ENCODE measurements at regions of chr9 and their contacts with region 1.

Region 1: DNA sequence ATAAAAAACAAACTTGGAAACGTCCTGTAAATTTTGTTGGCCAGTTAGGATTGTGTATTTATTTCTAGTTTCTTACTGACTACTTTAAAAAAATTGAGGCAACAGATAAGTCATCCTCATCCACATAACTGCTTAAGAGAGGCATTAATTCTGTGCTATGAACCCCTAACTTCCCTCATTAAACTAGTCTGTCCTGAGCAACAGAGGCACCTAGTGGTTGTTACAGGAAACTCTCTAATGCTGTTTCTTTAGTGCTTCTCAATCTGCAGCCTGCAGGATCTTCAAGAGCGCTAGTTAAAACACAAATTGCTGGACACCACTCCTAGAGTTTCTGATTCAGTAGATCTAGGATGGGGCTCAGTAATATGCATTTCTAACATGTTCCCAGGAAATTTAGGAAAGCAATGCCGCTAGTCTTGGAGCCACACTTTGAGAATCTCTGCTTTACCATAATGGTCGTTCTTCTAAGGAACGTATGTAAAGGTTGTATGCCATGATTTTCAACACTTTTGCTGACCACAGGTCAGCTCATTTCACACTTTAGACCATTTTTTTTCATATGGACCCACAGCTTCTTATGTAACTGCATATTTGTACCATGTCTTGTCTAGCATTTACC is 410.1 kb upstream of the SMARCA2 start:
- DNase-seq: peak; percentile 42
- H3K4me3 ChIP-seq: no peak overlapping the region
- H3K27ac ChIP-seq: no peak overlapping the region
- H3K4me1 ChIP-seq: no peaks in the 10 kb centered on the region
- CTCF ChIP-seq: peak; percentile 81

Region 2: DNA sequence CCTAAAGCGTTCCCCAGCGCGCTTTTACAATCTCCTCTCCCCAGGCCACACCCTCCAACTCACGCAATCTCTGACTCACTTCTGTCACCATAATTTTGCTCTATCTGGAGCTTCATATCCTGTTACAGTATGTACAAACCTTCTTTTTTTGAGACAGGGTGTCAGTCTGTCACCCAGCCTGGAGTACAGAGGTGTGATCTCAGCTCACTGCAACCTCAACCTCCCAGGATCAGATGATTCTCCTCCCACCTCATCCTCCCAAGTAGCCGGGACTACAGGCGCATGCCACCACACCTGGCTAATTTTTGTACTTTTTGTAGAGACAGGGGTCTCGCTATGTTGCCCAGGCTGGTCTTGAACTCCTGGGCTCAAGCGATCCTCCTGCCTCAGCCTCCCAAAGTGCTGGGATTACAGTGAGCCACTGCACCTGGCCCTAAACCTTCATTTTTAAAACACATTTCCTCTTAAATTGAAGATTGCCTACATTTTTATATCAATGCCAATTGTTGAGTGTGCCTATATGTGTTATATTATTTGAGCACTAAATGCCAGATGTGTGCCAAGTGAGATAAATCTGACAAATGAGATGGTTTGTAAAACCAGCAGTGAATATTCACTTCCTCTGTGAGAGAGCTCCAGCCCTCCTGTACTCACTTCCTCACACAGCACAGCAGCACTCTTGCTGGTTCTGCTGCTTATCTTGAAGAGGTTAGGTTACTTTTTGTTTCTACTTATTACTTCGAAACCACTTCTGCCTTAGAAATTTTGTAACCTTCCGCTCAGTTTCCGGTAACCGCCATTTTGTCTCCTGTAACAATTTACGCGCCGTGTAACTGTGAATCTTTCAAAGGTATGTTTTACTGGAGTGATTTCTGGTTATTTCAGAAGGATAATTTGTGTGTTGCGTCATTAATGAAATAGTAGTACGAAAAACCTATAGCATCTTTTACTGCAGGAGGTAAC is 1332.5 kb before region 1 on chr9:
- CTCF ChIA-PET with region 1: no interaction called
- POLR2A ChIA-PET with region 1: no interaction called
- intact Hi-C with region 1: no loop called
- DNase-seq: peak; percentile 91
- H3K4me3 ChIP-seq: peak overlapping the region; percentile 74
- H3K27ac ChIP-seq: peak overlapping the region; percentile 94
- H3K4me1 ChIP-seq: peaks cover 26% of the 10 kb centered on the region
- CTCF ChIP-seq: no peak

Region 3: GRCh38 chr9:1018121-1018701 is 586.8 kb before region 1 on chr9:
- CTCF ChIA-PET with region 1: no interaction called
- POLR2A ChIA-PET with region 1: no interaction called
- intact Hi-C with region 1: loop called (anchors 5 kb)
- DNase-seq: peak; percentile 61
- H3K4me3 ChIP-seq: no peak overlapping the region
- H3K27ac ChIP-seq: no peak overlapping the region
- H3K4me1 ChIP-seq: no peaks in the 10 kb centered on the region
- CTCF ChIP-seq: peak; percentile 76

Region 4: GRCh38 chr9:1460143-1460769 is 144.8 kb before region 1 on chr9:
- CTCF ChIA-PET with region 1: no interaction called
- POLR2A ChIA-PET with region 1: no interaction called
- intact Hi-C with region 1: loop called (anchors 10 kb)
- DNase-seq: peak; percentile 19
- H3K4me3 ChIP-seq: no peak overlapping the region
- H3K27ac ChIP-seq: no peak overlapping the region
- H3K4me1 ChIP-seq: no peaks in the 10 kb centered on the region
- CTCF ChIP-seq: peak; percentile 81

Measured in OCI-LY7 (cell line).